ENCODE measurements at regions of chr5 and their contacts with region 1.

Region 1: GRCh38 chr5:160342403-160342941 is 28.0 kb downstream of the C1QTNF2 start:
- ATAC-seq: peak in 2 of 8 experiments; percentile 18 to 79
- H3K4me3 ChIP-seq: no peak overlapping the region
- H3K27ac ChIP-seq: no peak overlapping the region
- H3K4me1 ChIP-seq: peaks cover 3 to 5% of the 10 kb centered on the region in 2 donors

Region 2: DNA sequence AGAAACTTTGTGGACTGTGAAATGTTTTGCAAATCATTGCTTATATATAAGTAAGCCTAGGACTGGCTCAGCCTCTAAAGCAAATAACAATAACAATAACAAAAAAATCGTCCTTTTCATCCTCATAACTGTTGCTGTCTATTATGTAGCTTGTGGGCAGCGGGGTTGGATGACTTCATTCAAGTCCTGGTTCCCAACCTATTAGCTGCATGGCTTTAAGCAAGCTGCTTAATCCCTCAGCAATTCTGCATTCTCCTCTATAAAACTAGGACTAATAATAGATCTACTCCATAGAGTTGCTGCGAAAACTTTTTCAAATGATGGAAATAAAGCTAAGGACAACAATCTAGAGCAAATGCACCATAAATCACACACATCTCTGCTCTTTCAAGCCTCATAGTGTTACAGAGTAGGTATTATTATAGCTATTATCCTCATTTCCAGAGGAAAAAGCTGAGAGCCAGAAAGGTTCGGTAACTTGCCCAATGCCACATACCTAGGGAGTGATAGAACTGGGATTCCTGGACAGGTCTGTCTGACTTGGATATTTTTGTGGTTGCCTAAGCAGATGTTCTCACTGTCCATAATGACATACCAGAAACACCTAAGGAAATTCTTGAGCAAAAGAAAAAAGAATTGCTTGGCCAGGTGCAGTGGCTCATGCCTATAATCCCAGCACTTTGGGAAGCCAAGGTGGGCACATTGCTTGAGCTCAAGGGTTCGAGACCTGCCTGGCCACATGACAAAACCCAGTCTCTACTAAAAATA is 525.0 kb before region 1 on chr5:
- in situ Hi-C with region 1: no loop called
- ATAC-seq: peak in 1 of 8 experiments; percentile 32
- H3K4me3 ChIP-seq: no peak overlapping the region
- H3K27ac ChIP-seq: no peak overlapping the region
- H3K4me1 ChIP-seq: no peaks in the 10 kb centered on the region

Region 3: DNA sequence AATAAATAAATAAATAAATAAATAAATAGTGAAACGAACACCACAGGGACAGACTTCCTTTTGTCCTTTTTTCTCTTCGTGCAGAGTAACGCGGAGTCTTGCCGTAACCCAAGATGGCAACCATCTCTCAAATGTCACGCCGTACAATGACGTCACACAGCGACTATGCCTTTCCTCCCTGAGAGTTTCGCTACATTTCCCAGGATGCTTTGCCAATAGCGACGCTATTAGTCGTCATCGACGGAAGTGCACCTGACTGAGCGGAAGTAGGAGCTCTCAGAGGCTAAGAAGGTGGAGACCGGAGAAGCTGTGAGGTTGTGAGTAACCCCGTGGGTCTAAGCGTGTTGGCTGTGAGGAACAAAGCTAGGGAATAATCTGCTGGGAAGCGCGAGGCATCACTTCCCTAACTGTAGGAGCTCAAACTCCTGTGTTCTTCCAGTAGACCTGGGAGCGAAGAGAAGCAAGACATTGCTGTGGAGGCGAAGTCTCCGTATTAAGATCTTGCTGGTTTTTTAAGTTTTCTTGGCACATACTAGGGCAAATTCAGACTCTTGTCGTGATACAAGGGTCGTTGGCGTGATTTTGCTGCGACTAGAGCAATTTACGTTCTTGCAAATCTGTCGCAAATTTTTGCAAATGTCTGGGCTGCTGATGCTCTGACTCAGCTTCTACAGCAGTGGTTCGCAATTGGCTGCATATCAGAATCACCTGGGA is 333.4 kb before region 1 on chr5 and contains the start of gene TTC1:
- in situ Hi-C with region 1: loop called in 4 of 9 experiments (anchors 10 to 25 kb)
- ATAC-seq: peak; percentile 95 to 99 (median 99)
- H3K4me3 ChIP-seq: peak within 1 kb of the TSS; percentile 69 to 98 (median 82)
- H3K27ac ChIP-seq: peak within 1 kb of the TSS; percentile 88
- H3K4me1 ChIP-seq: peaks cover 12 to 15% of the 10 kb centered on the region in 2 donors
- total RNA-seq, gene TTC1: 46.5 to 199 (median 69.8) TPM

Region 4: GRCh38 chr5:160021831-160022446 is 320.5 kb before region 1 on chr5:
- in situ Hi-C with region 1: loop called in 8 of 9 experiments (anchors 10 to 25 kb)
- ATAC-seq: peak; percentile 81 to 97 (median 88)
- H3K4me3 ChIP-seq: no peak overlapping the region
- H3K27ac ChIP-seq: no peak overlapping the region
- H3K4me1 ChIP-seq: no peaks in the 10 kb centered on the region

Region 5: GRCh38 chr5:160030631-160031377 is 311.7 kb before region 1 on chr5:
- in situ Hi-C with region 1: loop called in 4 of 9 experiments (anchors 10 to 25 kb)
- ATAC-seq: peak; percentile 16 to 79 (median 40)
- H3K4me3 ChIP-seq: no peak overlapping the region
- H3K27ac ChIP-seq: no peak overlapping the region
- H3K4me1 ChIP-seq: peaks cover 6 to 11% of the 10 kb centered on the region in 2 donors

Region 6: GRCh38 chr5:160152287-160152686 is 190.2 kb before region 1 on chr5:
- in situ Hi-C with region 1: no loop called
- ATAC-seq: no peak
- H3K4me3 ChIP-seq: no peak overlapping the region
- H3K27ac ChIP-seq: no peak overlapping the region
- H3K4me1 ChIP-seq: no peaks in the 10 kb centered on the region

Region 7: DNA sequence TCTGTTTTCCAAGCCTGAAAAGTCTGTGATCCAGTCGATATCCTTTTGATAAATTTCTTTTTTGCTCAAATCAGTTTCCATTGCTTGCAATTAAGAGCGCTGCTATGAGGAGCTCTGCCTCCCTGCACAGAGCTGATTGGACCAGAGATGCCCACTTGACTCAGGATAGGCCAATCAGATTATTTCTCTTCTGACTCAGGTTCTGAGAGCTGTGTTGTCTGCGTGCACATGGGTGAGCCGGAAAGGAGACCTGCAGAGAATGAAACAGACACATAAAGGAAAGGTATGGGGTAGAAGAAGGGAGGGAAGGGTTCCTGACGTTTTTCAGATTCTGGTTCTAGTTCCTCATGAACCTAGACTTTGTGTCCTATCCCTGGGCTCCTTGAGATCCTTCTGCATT is 128.9 kb before region 1 on chr5:
- in situ Hi-C with region 1: loop called in 2 of 9 experiments (anchors 10 to 25 kb)
- ATAC-seq: peak in 3 of 8 experiments; percentile 45 to 88 (median 86)
- H3K4me3 ChIP-seq: no peak overlapping the region
- H3K27ac ChIP-seq: no peak overlapping the region
- H3K4me1 ChIP-seq: peaks cover 8 to 13% of the 10 kb centered on the region in 2 donors

Measured in motor neuron (in vitro differentiated cells).